Tibial artery (tissue), 4 donors: ENCODE measurements at regions of chr14 and their contacts with region 1.

Region 1: DNA sequence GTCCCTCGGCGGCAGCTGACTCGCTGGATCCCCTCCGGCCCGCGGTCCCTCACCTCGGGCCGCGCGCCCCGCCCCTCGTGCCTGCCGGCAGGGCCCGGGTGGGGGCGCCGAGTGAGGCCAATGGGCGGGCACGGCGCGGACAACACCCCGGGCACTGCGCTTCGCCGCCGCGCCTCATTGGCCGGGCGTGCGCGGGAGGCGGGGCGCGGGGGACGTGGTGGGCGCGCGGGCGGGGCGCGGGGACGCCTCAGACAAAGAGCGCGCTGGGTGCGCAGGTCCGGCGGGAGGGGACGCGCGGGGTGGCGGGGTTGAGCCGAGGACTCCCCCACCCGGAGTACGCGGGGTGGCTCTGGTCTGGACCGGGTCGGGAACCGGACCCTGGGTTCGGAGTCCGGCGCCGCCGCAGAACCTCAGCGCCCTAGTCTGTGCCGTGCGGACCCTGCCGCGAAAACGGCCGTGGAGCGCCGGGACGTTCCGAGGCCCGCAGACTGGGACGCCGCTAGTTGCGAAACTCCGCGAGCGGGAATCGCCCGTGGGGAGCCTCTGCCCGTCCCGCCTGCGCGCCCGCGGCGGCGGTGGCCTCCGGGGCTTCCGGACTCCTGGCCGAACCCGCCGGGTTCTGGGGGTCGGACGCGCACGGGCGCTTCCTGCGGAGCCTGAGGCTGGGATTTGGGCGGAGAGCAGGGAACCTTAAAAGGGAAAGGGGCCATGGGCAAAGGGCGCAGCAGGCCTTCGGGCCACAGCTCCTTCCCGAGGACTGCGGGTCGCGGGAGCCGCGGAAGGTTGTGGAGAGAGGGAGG is at the start of gene SLC25A29:
- DNase-seq: peak; percentile 86 to 95
- H3K4me3 ChIP-seq: peak within 1 kb of the TSS; percentile 80
- H3K27ac ChIP-seq: peak within 1 kb of the TSS; percentile 79 to 82
- H3K4me1 ChIP-seq: peaks cover 0 to 41% (median 27%) of the 10 kb centered on the region in 4 donors
- H3K27me3 ChIP-seq: peaks cover 0 to 4% of the 10 kb centered on the region in 2 donors
- CTCF ChIP-seq: no peak

Region 2: GRCh38 chr14:100239840-100240724 is 66.5 kb before region 1 on chr14:
- intact Hi-C with region 1: loop called (anchors 5 kb)
- DNase-seq: peak; percentile 87 to 95
- H3K4me3 ChIP-seq: peak overlapping the region; percentile 96 to 99
- H3K27ac ChIP-seq: peak overlapping the region; percentile 87 to 97
- H3K4me1 ChIP-seq: peaks cover 0 to 69% (median 51%) of the 10 kb centered on the region in 4 donors
- H3K27me3 ChIP-seq: no peaks in the 10 kb centered on the region
- CTCF ChIP-seq: peak; percentile 69 to 78

Region 3: DNA sequence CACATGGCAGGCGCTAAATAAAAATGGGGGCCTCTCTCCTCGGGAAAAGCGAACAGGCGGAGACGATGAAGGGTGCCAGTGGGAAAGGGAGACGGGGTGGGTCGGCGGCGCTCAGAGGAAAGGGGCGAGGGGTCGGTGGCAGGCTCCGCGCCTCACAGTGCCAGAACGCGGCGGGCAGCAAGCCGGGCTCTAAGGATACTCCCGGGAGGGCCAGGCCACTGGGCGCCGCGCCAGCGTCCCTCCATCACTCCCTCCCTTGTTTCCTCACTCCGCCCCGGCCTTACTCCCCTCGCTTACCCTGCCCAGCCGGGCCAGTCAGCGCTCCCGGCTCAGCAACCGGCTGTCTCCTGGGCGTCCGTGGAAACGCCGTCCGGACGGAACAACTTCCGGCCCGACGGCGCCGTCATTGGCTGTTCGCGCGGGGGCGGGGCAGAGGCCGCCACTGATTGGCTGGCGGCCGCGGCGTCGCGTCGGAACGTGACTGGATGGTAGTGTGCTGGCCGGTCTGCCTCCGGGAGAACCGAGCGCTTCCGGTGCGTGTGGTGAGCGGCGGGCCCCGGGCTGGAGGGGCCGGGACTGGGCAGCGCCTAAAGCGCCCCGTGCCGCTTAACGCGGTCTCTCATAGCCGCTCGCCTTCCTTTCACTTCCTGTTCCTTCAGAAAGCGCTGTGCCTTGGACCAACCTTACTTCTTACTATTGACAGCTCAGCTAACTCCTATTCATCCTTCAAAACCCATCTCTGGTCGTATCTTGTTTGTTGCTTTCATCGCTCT is 69.5 kb after region 1 on chr14:
- intact Hi-C with region 1: loop called (anchors 5 kb)
- DNase-seq: peak; percentile 93 to 98
- H3K4me3 ChIP-seq: peak within 1 kb of the TSS; percentile 72 to 76
- H3K27ac ChIP-seq: peak within 1 kb of the TSS; percentile 87 to 91
- H3K4me1 ChIP-seq: peaks cover 0 to 31% (median 23%) of the 10 kb centered on the region in 4 donors
- H3K27me3 ChIP-seq: no peaks in the 10 kb centered on the region
- CTCF ChIP-seq: no peak